Activated T-helper 2 cell treated with anti-CD3 and anti-CD28 coated beads, Interferon-gamma antibody, Interleukin-2, Interleukin-4, amounts not matched to agents 10 μg/mL and 5 μg/mL and 100 μg/mL, durations not matched to agents 14 hours and 24 hours and 36 hours (primary cell): ENCODE measurements at regions of chr14 and their contacts with region 1.

Region 1: GRCh38 chr14:91396959-91397815 is 20.4 kb downstream of the CCDC88C start:
- DNase-seq: peak; percentile 65
- H3K4me3 Mint-ChIP-seq: peak overlapping the region; percentile 68
- H3K27ac Mint-ChIP-seq: peak overlapping the region; percentile 80
- H3K4me1 Mint-ChIP-seq: peaks cover 70% of the 10 kb centered on the region
- H3K27me3 Mint-ChIP-seq: no peaks in the 10 kb centered on the region

Region 2: DNA sequence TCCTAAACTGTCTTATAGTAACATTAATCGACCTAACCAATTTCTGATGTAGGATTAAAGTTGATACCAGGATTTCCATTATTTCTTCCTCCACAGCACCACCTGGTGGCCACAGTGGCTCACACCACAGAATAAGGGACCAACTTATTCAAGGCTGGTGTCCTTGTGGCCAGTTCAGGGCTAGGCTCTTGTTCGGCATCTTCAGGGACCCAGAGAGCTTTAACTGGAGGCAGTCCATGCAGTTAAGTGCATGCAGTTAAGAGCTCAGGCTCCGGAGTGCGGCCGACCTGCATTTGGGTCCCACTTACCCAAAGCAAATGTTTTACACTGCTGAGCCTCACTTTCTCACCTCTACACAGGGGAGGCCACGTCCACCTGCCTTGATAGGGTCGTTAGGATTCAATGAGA is 110.7 kb before region 1 on chr14:
- intact Hi-C with region 1: no loop called
- DNase-seq: peak; percentile 68
- H3K4me3 Mint-ChIP-seq: no peak overlapping the region
- H3K27ac Mint-ChIP-seq: peak overlapping the region; percentile 66
- H3K4me1 Mint-ChIP-seq: peaks cover 13% of the 10 kb centered on the region
- H3K27me3 Mint-ChIP-seq: no peaks in the 10 kb centered on the region

Region 3: GRCh38 chr14:91380610-91381371 is 16.4 kb before region 1 on chr14:
- intact Hi-C with region 1: loop called (anchors 2 kb)
- DNase-seq: no peak
- H3K4me3 Mint-ChIP-seq: no peak overlapping the region
- H3K27ac Mint-ChIP-seq: peak overlapping the region; percentile 47
- H3K4me1 Mint-ChIP-seq: peaks cover 79% of the 10 kb centered on the region
- H3K27me3 Mint-ChIP-seq: no peaks in the 10 kb centered on the region

Region 4: GRCh38 chr14:91410771-91411536 is 13.8 kb after region 1 on chr14:
- intact Hi-C with region 1: loop called (anchors 2 kb)
- DNase-seq: no peak
- H3K4me3 Mint-ChIP-seq: peak overlapping the region; percentile 63
- H3K27ac Mint-ChIP-seq: peak overlapping the region; percentile 95
- H3K4me1 Mint-ChIP-seq: peaks cover 82% of the 10 kb centered on the region
- H3K27me3 Mint-ChIP-seq: no peaks in the 10 kb centered on the region